ENCODE measurements at regions of chr3 and their contacts with region 1.

Region 1: GRCh38 chr3:187025656-187026316 is 95.5 kb downstream of the ST6GAL1 start:
- DNase-seq: peak in 4 of 9 donors; percentile 35 to 45 (median 41)
- ATAC-seq: peak; percentile 17
- H3K4me3 ChIP-seq: peak overlapping the region; percentile 68
- H3K4me3 Mint-ChIP-seq: peak overlapping the region; percentile 88 to 97 (median 93)
- H3K27ac ChIP-seq: peak overlapping the region; percentile 78
- H3K27ac Mint-ChIP-seq: peak overlapping the region; percentile 86 to 99 (median 92)
- H3K4me1 ChIP-seq: peaks cover 31 to 45% of the 10 kb centered on the region in 2 donors
- H3K4me1 Mint-ChIP-seq: peaks cover 40 to 73% (median 61%) of the 10 kb centered on the region in 7 donors
- H3K27me3 ChIP-seq: no peaks in the 10 kb centered on the region
- H3K27me3 Mint-ChIP-seq: no peaks in the 10 kb centered on the region

Region 2: GRCh38 chr3:186013312-186013711 is 1012.5 kb before region 1 on chr3:
- CTCF ChIA-PET with region 1: no interaction called
- POLR2A ChIA-PET with region 1: no interaction called
- intact Hi-C with region 1: no loop called
- DNase-seq: no peak
- ATAC-seq: no peak
- H3K4me3 ChIP-seq: no peak overlapping the region
- H3K4me3 Mint-ChIP-seq: no peak overlapping the region
- H3K27ac ChIP-seq: no peak overlapping the region
- H3K27ac Mint-ChIP-seq: no peak overlapping the region
- H3K4me1 ChIP-seq: no peaks in the 10 kb centered on the region
- H3K4me1 Mint-ChIP-seq: no peaks in the 10 kb centered on the region
- H3K27me3 ChIP-seq: no peaks in the 10 kb centered on the region
- H3K27me3 Mint-ChIP-seq: peaks cover 10 to 32% (median 19%) of the 10 kb centered on the region in 5 donors

Region 3: GRCh38 chr3:186551387-186551786 is 474.4 kb before region 1 on chr3:
- CTCF ChIA-PET with region 1: no interaction called
- POLR2A ChIA-PET with region 1: no interaction called
- intact Hi-C with region 1: no loop called
- DNase-seq: no peak
- ATAC-seq: no peak
- H3K4me3 ChIP-seq: no peak overlapping the region
- H3K4me3 Mint-ChIP-seq: no peak overlapping the region
- H3K27ac ChIP-seq: no peak overlapping the region
- H3K27ac Mint-ChIP-seq: no peak overlapping the region
- H3K4me1 ChIP-seq: no peaks in the 10 kb centered on the region
- H3K4me1 Mint-ChIP-seq: no peaks in the 10 kb centered on the region
- H3K27me3 ChIP-seq: no peaks in the 10 kb centered on the region
- H3K27me3 Mint-ChIP-seq: no peaks in the 10 kb centered on the region

Region 4: DNA sequence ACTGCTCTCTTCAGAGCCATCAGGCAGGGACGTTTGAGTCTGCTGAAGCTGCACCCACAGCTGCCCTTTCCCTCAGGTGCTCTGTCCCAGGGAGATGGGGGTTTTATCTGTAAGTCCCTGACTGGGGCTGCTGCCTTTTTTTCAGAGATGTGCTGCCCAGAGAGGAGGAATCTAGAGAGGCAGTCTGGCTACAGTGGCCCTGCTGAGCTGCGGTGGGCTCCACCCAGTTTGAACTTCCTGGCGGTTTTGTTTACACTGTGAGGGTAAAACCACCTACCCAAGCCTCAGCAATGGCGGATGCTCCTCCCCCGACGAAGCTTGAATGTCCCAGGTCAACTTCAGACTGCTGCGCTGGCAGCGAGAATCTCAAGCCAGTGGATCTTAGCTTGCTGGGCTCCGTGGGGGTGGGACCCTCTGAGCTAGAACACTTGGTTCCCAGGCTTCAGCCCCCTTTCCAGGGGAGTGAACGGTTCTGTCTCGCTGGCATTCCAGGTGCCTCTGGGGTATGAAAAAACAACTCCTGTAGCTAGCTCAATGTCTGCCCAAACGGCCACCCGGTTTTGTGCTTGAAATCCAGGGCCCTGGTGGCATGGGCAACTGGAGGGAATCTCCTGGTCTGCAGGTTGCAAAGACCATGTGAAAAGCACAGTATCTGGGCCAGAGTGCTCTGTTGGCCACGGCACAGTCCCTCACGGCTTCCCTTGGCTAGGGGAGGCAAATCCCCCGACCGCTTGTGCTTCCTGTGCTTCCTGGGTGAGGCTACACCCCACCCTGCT is 116.5 kb before region 1 on chr3:
- CTCF ChIA-PET with region 1: no interaction called
- POLR2A ChIA-PET with region 1: interaction called, 26 read pairs
- intact Hi-C with region 1: no loop called
- DNase-seq: peak; percentile 40 to 86 (median 78)
- ATAC-seq: peak; percentile 86
- H3K4me3 ChIP-seq: peak overlapping the region; percentile 48
- H3K4me3 Mint-ChIP-seq: peak overlapping the region; percentile 61 to 78 (median 72)
- H3K27ac ChIP-seq: peak overlapping the region; percentile 66
- H3K27ac Mint-ChIP-seq: peak overlapping the region; percentile 88 to 94 (median 91)
- H3K4me1 ChIP-seq: peaks cover 17 to 18% of the 10 kb centered on the region in 2 donors
- H3K4me1 Mint-ChIP-seq: peaks cover 17 to 48% (median 37%) of the 10 kb centered on the region in 7 donors
- H3K27me3 ChIP-seq: no peaks in the 10 kb centered on the region
- H3K27me3 Mint-ChIP-seq: no peaks in the 10 kb centered on the region

Region 5: GRCh38 chr3:186953011-186953487 is 72.7 kb before region 1 on chr3:
- CTCF ChIA-PET with region 1: no interaction called
- POLR2A ChIA-PET with region 1: no interaction called
- intact Hi-C with region 1: loop called in 1 of 2 experiments (anchors 5 kb)
- DNase-seq: no peak
- ATAC-seq: peak; percentile 70
- H3K4me3 ChIP-seq: no peak overlapping the region
- H3K4me3 Mint-ChIP-seq: peak overlapping the region; percentile 0 to 76 (median 45)
- H3K27ac ChIP-seq: peak overlapping the region; percentile 6
- H3K27ac Mint-ChIP-seq: peak overlapping the region; percentile 18 to 91 (median 63)
- H3K4me1 ChIP-seq: peaks cover 13 to 52% of the 10 kb centered on the region in 2 donors
- H3K4me1 Mint-ChIP-seq: peaks cover 71 to 95% (median 83%) of the 10 kb centered on the region in 7 donors
- H3K27me3 ChIP-seq: no peaks in the 10 kb centered on the region
- H3K27me3 Mint-ChIP-seq: no peaks in the 10 kb centered on the region

Region 6: GRCh38 chr3:187006864-187007630 is 18.7 kb before region 1 on chr3:
- CTCF ChIA-PET with region 1: interaction called, 5 read pairs
- POLR2A ChIA-PET with region 1: interaction called, 58 read pairs
- intact Hi-C with region 1: loop called (anchors 1 kb)
- DNase-seq: peak in 4 of 9 donors; percentile 43 to 62 (median 52)
- ATAC-seq: peak; percentile 70
- H3K4me3 ChIP-seq: no peak overlapping the region
- H3K4me3 Mint-ChIP-seq: peak overlapping the region in 9 of 10 donors; percentile 10 to 79 (median 60)
- H3K27ac ChIP-seq: no peak overlapping the region
- H3K27ac Mint-ChIP-seq: peak overlapping the region; percentile 5 to 89 (median 61)
- H3K4me1 ChIP-seq: peaks cover 31 to 32% of the 10 kb centered on the region in 2 donors
- H3K4me1 Mint-ChIP-seq: peaks cover 48 to 80% (median 66%) of the 10 kb centered on the region in 7 donors
- H3K27me3 ChIP-seq: no peaks in the 10 kb centered on the region
- H3K27me3 Mint-ChIP-seq: no peaks in the 10 kb centered on the region

Region 7: DNA sequence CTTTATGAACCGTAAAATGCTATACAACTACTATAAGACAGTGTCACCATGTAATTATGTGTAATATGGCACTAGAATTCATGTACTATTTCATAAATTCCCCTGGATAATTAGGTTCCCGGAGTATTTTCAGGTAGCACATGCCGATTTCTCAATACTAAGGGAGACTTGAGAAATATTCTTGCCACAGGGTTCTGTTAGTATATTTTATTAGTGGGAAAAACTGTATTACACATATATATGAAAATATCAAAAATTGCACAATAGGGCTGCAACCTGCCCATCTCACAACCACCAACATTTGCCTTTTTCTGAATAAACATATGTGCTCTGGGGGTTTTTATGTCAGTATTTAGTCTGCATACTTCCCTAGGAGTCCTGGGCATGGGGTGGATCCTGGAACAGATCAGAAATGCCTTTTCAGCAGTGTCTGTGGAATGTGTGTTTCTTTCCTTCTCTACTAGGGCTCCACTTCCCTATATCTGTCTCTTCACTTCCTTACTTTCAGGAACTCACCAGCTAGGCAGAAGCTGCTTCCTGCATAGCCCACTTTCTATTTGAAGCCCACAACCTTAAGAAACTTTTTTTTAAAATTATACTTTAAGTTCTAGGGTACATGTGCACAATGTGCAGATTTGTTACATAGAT is 26.1 kb after region 1 on chr3:
- CTCF ChIA-PET with region 1: no interaction called
- POLR2A ChIA-PET with region 1: interaction called, 226 read pairs
- intact Hi-C with region 1: no loop called
- DNase-seq: no peak
- ATAC-seq: no peak
- H3K4me3 ChIP-seq: no peak overlapping the region
- H3K4me3 Mint-ChIP-seq: peak overlapping the region in 2 of 10 donors; percentile 9 to 87
- H3K27ac ChIP-seq: no peak overlapping the region
- H3K27ac Mint-ChIP-seq: peak overlapping the region in 7 of 9 donors; percentile 38 to 99 (median 56)
- H3K4me1 ChIP-seq: peaks cover 0 to 21% of the 10 kb centered on the region in 2 donors
- H3K4me1 Mint-ChIP-seq: peaks cover 53 to 87% (median 58%) of the 10 kb centered on the region in 7 donors
- H3K27me3 ChIP-seq: no peaks in the 10 kb centered on the region
- H3K27me3 Mint-ChIP-seq: no peaks in the 10 kb centered on the region

Region 8: DNA sequence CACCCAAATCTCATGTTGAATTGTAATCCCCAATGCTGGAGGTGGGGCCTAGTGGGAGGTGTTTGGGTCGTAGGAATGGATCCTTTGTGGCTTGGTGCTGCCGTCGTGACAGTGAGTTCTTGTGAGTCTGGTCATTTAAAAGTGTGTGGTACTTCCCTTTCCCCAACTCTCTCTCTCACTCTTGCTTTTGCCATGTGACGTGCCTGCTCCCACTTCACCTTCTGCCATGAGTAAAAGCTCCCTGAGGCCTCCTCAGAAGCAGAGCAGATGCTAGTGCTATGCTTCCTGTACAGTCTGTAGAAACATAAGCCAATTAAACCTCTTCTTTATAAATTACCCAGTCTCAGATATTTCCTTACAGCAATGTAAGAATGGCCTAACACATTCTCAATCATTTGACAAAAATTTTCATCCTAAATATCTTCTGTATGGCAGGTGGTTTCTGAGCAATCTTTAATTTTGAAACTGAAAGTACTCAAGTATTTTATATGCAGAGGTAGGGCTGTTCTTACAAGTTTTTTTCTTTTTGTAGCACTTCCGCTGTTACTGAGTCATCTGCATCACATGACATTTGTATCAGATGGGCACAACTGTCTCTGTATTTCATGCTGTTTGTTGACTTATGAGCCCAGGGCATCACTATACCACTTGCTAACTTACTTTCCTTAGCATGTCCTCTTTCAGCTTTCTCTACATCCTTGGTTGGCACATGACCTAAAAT is 104.7 kb after region 1 on chr3:
- CTCF ChIA-PET with region 1: no interaction called
- POLR2A ChIA-PET with region 1: interaction called, 4 read pairs
- intact Hi-C with region 1: loop called (anchors 1 to 2 kb)
- DNase-seq: peak in 7 of 9 donors; percentile 61 to 86 (median 81)
- ATAC-seq: peak; percentile 99
- H3K4me3 ChIP-seq: no peak overlapping the region
- H3K4me3 Mint-ChIP-seq: peak overlapping the region; percentile 43 to 86 (median 74)
- H3K27ac ChIP-seq: peak overlapping the region; percentile 68
- H3K27ac Mint-ChIP-seq: peak overlapping the region; percentile 95 to 99 (median 97)
- H3K4me1 ChIP-seq: peaks cover 19 to 22% of the 10 kb centered on the region in 2 donors
- H3K4me1 Mint-ChIP-seq: peaks cover 12 to 49% (median 25%) of the 10 kb centered on the region in 7 donors
- H3K27me3 ChIP-seq: no peaks in the 10 kb centered on the region
- H3K27me3 Mint-ChIP-seq: no peaks in the 10 kb centered on the region

Region 9: DNA sequence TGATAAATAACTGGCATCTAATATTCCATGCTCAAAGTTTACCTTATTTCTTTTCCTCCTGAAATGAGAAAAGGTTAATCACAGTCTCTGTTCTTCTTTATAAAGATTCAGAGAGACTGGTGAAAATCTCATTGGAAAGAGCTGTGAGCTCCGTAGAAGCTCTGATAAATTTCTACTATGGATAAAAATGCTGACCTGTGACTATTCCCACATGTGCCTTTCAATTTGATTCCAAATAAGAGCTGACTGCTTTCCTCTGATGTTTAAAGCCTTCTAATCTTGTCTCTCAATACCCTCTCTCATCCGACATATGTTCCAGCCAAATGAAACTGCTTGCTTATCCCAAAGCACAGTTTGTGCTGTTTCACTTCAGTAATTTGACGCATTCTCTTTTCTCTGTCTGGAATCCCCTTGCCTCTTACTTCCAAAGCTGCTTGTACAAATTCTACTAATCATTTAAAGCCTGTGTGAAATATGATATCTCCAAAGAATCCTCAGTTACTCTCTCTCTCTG is 472.5 kb after region 1 on chr3:
- CTCF ChIA-PET with region 1: no interaction called
- POLR2A ChIA-PET with region 1: no interaction called
- intact Hi-C with region 1: no loop called
- DNase-seq: no peak
- ATAC-seq: no peak
- H3K4me3 ChIP-seq: no peak overlapping the region
- H3K4me3 Mint-ChIP-seq: no peak overlapping the region
- H3K27ac ChIP-seq: no peak overlapping the region
- H3K27ac Mint-ChIP-seq: no peak overlapping the region
- H3K4me1 ChIP-seq: no peaks in the 10 kb centered on the region
- H3K4me1 Mint-ChIP-seq: no peaks in the 10 kb centered on the region
- H3K27me3 ChIP-seq: no peaks in the 10 kb centered on the region
- H3K27me3 Mint-ChIP-seq: peaks cover 13 to 32% (median 24%) of the 10 kb centered on the region in 5 donors